Activated naive CD4-positive, alpha-beta T cell treated with anti-CD3 and anti-CD28 coated beads for 36 hours (primary cell): ENCODE measurements at regions of chr17 and their contacts with region 1.

Region 1: DNA sequence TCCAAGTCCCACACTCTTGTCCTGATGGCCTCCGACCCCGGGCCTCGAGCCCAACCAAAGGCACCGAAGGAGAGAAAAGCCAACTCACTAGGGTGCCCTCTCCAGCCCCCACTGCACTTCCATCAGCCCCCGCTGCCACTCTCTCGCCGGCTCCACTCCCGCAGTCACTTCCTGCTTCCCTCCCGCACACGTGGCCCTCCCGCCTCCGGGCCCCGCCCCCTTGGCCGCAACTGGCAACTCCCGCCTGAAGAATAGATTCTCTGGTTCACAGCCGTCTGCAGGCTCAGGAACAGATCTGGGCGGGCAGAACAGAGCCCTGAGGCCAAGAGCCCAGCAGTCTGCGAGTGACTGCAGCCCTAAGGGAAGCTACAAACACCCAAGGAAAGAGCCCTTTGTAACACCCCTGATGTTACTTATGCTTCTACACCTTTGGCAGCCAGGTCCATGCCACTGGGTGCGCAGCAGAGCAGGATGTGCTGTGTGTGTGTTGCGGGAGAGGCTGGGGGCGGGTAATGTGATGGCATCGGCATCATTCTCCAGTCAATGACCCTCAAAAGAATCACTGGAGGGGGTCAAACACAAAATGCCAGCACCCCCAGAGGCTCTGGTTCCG is at the start of gene SLC39A11:
- DNase-seq: peak; percentile 92
- H3K4me3 Mint-ChIP-seq: peak within 1 kb of the TSS; percentile 99
- H3K27ac Mint-ChIP-seq: peak within 1 kb of the TSS; percentile 84
- H3K4me1 Mint-ChIP-seq: peaks cover 28% of the 10 kb centered on the region
- H3K27me3 Mint-ChIP-seq: no peaks in the 10 kb centered on the region
- total RNA-seq, gene SLC39A11: 14.0 to 16.4 TPM

Region 2: GRCh38 chr17:72754513-72754912 is 338.1 kb before region 1 on chr17:
- CTCF ChIA-PET with region 1: no interaction called
- intact Hi-C with region 1: no loop called
- DNase-seq: no peak
- H3K4me3 Mint-ChIP-seq: no peak overlapping the region
- H3K27ac Mint-ChIP-seq: no peak overlapping the region
- H3K4me1 Mint-ChIP-seq: no peaks in the 10 kb centered on the region
- H3K27me3 Mint-ChIP-seq: no peaks in the 10 kb centered on the region

Region 3: GRCh38 chr17:73311781-73312641 is 219.4 kb after region 1 on chr17 and contains the start of gene CDC42EP4:
- CTCF ChIA-PET with region 1: no interaction called
- intact Hi-C with region 1: loop called (anchors 1 kb)
- DNase-seq: peak; percentile 91
- H3K4me3 Mint-ChIP-seq: peak within 1 kb of the TSS; percentile 80
- H3K27ac Mint-ChIP-seq: no peak within 1 kb of the TSS
- H3K4me1 Mint-ChIP-seq: peaks cover 10% of the 10 kb centered on the region
- H3K27me3 Mint-ChIP-seq: no peaks in the 10 kb centered on the region
- total RNA-seq, gene CDC42EP4: 1.7 to 2.1 TPM